ENCODE measurements at regions of chr4 and their contacts with region 1.

Region 1: DNA sequence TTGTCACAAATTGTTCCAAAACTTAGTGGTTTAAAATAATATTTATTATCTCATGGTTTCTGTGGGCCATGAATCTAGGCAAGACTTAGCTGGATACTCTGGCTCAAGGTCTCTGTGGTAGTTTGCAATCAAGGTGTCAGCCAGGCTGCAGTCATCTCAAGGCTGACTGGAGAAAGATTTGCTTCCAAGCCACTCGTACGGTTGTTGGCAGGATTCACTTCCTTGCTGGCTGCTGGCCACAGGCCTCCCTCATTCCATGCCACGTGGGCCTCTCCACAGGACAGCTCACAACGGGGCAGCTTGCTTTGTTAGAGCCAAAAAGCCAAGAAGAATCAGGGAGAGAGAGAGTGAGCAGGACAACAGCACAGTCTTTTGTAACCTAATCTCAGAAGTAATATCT is 101.4 kb downstream of the WWC2 start:
- DNase-seq: peak; percentile 93
- H3K4me3 ChIP-seq: no peak overlapping the region
- H3K27ac ChIP-seq: peak overlapping the region; percentile 9
- H3K4me1 ChIP-seq: peaks cover 14% of the 10 kb centered on the region
- H3K27me3 ChIP-seq: no peaks in the 10 kb centered on the region
- CTCF ChIP-seq: no peak
- POLR2A ChIP-seq: no peak

Region 2: GRCh38 chr4:183182873-183183725 is 17.4 kb before region 1 on chr4:
- CTCF ChIA-PET with region 1: interaction called, 4 read pairs
- POLR2A ChIA-PET with region 1: no interaction called
- dilution Hi-C with region 1: no loop called
- intact Hi-C with region 1: loop called (anchors 1 kb)
- DNase-seq: peak; percentile 93
- H3K4me3 ChIP-seq: no peak overlapping the region
- H3K27ac ChIP-seq: peak overlapping the region; percentile 63
- H3K4me1 ChIP-seq: peaks cover 16% of the 10 kb centered on the region
- H3K27me3 ChIP-seq: no peaks in the 10 kb centered on the region
- CTCF ChIP-seq: no peak
- POLR2A ChIP-seq: no peak

Region 3: GRCh38 chr4:183618681-183619080 is 418.2 kb after region 1 on chr4:
- CTCF ChIA-PET with region 1: no interaction called
- POLR2A ChIA-PET with region 1: no interaction called
- dilution Hi-C with region 1: no loop called
- intact Hi-C with region 1: no loop called
- DNase-seq: no peak
- H3K4me3 ChIP-seq: no peak overlapping the region
- H3K27ac ChIP-seq: no peak overlapping the region
- H3K4me1 ChIP-seq: no peaks in the 10 kb centered on the region
- H3K27me3 ChIP-seq: no peaks in the 10 kb centered on the region
- CTCF ChIP-seq: no peak
- POLR2A ChIP-seq: no peak